PC-3 (cell line): ENCODE measurements at regions of chr19 and their contacts with region 1.

Region 1: GRCh38 chr19:16185123-16185767 is at the start of gene FAM32A:
- DNase-seq: peak; percentile 99
- ATAC-seq: peak; percentile 86
- H3K4me3 ChIP-seq: peak within 1 kb of the TSS; percentile 89
- H3K27ac ChIP-seq: peak within 1 kb of the TSS; percentile 12; the same call in 1 of the 2 replicates
- H3K4me1 ChIP-seq: peaks cover 17% of the 10 kb centered on the region
- H3K27me3 ChIP-seq: no peaks in the 10 kb centered on the region
- CTCF ChIP-seq: no peak
- total RNA-seq, gene FAM32A: 141 and 165 TPM in 2 replicates

Region 2: DNA sequence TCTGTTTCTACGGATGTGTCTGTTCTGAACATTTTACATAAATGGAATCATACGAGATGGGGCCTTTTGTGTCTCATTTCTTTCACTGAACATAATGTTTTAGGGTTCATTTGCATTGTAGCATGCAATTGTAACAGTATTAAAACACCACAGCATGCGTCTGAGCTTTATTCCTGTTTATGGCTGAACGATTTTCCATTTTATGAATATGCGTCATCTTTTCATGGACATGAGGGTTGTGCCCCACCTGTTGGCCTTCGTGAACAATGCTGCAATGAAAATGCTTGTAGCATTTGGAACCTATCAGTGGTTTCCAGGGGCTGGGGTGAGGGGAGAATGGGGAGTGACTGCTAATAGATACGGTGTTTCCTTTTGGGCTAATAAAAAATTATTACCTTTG is 374.9 kb before region 1 on chr19:
- CTCF ChIA-PET with region 1: no interaction called
- POLR2A ChIA-PET with region 1: no interaction called
- intact Hi-C with region 1: loop called (anchors 2 kb)
- DNase-seq: peak; percentile 81
- ATAC-seq: peak; percentile 70
- H3K4me3 ChIP-seq: peak overlapping the region; percentile 36
- H3K27ac ChIP-seq: no peak overlapping the region
- H3K4me1 ChIP-seq: no peaks in the 10 kb centered on the region
- H3K27me3 ChIP-seq: no peaks in the 10 kb centered on the region
- CTCF ChIP-seq: peak; percentile 77

Region 3: GRCh38 chr19:16041299-16041990 is 143.8 kb before region 1 on chr19:
- CTCF ChIA-PET with region 1: interaction called, 11 read pairs
- POLR2A ChIA-PET with region 1: no interaction called
- intact Hi-C with region 1: loop called (anchors 1 kb)
- DNase-seq: peak; percentile 87
- ATAC-seq: peak; percentile 95
- H3K4me3 ChIP-seq: peak overlapping the region; percentile 36
- H3K27ac ChIP-seq: no peak overlapping the region
- H3K4me1 ChIP-seq: 0 out of 2 replicates have a peak, but pooled peaks cover 5% of the 10 kb centered on the region
- H3K27me3 ChIP-seq: no peaks in the 10 kb centered on the region
- CTCF ChIP-seq: peak; percentile 95

Region 4: DNA sequence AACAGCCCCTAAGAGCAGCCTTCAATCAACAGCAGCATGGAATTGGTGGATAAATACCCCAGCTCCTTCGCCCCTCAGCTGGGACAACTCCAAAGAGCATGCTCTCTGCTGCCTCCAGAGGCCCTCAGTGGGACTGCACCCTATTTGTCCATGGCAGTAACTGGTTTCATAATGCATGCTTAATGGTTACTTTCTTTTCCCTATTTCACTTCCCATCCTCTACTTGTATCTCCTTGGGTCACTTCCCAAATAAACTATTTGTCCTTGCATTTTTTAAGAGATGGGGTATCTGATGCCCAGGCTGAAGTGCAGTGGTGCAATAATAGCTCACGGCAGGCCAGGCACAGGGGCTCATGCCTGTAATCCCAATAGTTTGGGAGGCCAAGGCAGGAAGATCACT is 122.5 kb before region 1 on chr19:
- CTCF ChIA-PET with region 1: interaction called, 5 read pairs
- POLR2A ChIA-PET with region 1: interaction called, 13 read pairs
- intact Hi-C with region 1: loop called (anchors 1 kb)
- DNase-seq: peak; percentile 73
- ATAC-seq: no peak
- H3K4me3 ChIP-seq: no peak overlapping the region
- H3K27ac ChIP-seq: no peak overlapping the region
- H3K4me1 ChIP-seq: peaks cover 6% of the 10 kb centered on the region
- H3K27me3 ChIP-seq: no peaks in the 10 kb centered on the region
- CTCF ChIP-seq: peak; percentile 89

Region 5: DNA sequence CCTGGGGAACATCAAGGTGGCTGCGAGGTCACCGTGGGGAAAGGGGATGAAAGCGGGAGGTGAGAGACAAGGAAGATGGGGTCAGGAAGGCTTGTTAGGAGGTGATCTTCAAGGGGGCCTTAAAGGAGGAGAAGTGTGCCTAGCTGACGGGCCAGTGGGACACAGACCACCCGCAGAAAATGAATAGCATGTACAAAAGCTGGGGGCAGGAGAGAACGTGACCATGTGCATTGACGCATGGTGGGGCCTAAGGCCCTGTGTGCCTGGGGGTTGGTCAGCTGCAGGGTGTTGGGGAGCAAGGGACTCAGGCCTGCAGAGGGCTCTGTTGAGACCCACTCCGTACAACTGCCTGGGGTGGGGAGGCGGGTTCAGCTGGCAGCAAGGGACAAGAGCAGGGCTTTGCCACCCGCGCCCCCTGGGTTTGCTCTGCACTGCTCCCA is 67.6 kb before region 1 on chr19:
- CTCF ChIA-PET with region 1: interaction called, 15 read pairs
- POLR2A ChIA-PET with region 1: interaction called, 5 read pairs
- intact Hi-C with region 1: no loop called
- DNase-seq: no peak
- ATAC-seq: peak; percentile 46; the same call in 1 of the 2 replicates
- H3K4me3 ChIP-seq: no peak overlapping the region
- H3K27ac ChIP-seq: no peak overlapping the region
- H3K4me1 ChIP-seq: peaks cover 9% of the 10 kb centered on the region
- H3K27me3 ChIP-seq: no peaks in the 10 kb centered on the region
- CTCF ChIP-seq: peak; percentile 38

Region 6: DNA sequence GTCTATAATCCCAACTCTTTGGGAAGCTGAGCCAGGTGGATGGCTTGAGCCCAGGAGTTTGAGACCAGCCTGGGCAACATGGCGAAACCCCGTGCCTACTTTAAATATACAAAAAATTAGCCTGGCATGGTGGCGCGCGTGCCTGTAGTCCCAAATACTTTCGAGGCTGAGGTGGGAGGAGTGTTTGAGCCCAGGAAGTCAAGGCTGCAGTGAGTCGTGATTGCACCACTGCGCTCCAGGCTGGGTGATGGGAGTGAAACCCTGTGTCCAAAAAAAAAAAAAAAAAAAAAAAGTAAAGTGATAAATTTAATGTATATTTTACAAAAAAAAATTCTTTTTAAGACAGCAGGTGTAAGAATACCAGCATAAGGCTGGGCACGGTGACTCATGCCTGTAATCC is 493.3 kb after region 1 on chr19:
- CTCF ChIA-PET with region 1: no interaction called
- POLR2A ChIA-PET with region 1: interaction called, 14 read pairs
- intact Hi-C with region 1: no loop called
- DNase-seq: no peak
- ATAC-seq: no peak
- H3K4me3 ChIP-seq: no peak overlapping the region
- H3K27ac ChIP-seq: no peak overlapping the region
- H3K4me1 ChIP-seq: no peaks in the 10 kb centered on the region
- H3K27me3 ChIP-seq: no peaks in the 10 kb centered on the region
- CTCF ChIP-seq: no peak